Esophagus squamous epithelium (tissue), 5 donors: ENCODE measurements at regions of chr4 and their contacts with region 1.

Region 1: DNA sequence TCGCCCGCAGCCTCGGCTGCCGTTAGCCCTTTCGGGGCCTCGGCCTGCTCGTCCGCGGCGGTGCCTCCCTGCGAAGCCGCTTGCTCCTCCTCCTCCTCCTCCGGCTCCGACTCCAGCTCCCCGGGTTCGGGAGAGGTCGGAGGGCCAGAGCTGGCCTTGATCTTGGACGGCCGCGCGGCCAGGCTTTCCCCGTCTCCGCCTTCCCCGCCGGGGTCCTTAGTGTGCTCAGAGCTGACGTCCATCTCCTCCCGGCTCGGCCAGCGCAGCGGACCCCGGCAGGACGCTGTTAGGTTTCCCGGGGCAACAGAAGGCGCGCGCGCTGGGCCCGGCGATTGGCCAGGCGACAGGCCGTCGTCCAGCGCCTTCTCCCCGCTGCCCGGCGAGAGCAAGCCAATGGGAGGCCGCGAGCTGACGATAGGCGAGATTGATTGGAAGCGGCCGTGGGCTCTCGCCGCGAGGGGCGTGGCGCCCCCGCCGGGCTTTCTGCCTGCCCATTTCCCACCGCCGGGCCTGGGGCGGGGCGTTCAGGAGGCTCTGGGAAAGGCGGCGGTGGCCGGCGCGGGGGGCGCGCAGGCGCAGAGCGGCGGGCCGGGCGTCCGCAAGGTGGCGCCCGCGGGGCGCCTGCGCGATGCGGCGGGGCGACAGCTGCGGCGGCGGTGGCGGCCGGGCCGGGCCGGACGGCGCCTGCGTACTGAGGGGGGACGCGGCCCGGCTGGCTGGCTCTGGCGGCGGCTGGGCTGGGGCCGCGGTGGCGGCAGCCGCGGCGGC is at the start of gene TADA2B:
- DNase-seq: peak; percentile 71
- H3K4me3 ChIP-seq: peak within 1 kb of the TSS; percentile 74 to 100 (median 96)
- H3K27ac ChIP-seq: peak within 1 kb of the TSS; percentile 90 to 96 (median 94)
- H3K4me1 ChIP-seq: peaks cover 35 to 57% (median 38%) of the 10 kb centered on the region in 3 donors
- H3K27me3 ChIP-seq: no peaks in the 10 kb centered on the region
- CTCF ChIP-seq: peak in 4 of 6 experiments; percentile 68 to 84 (median 73)
- POLR2A ChIP-seq: no peak
- total RNA-seq, gene TADA2B: 10.1 to 16.5 (median 13.0) TPM

Region 2: GRCh38 chr4:6909073-6909965 is 133.6 kb before region 1 on chr4 and contains the start of gene TBC1D14:
- intact Hi-C with region 1: loop called (anchors 10 kb)
- DNase-seq: peak; percentile 39
- H3K4me3 ChIP-seq: peak within 1 kb of the TSS; percentile 74 to 93 (median 86)
- H3K27ac ChIP-seq: peak within 1 kb of the TSS; percentile 97 to 99 (median 98)
- H3K4me1 ChIP-seq: peaks cover 16 to 59% (median 19%) of the 10 kb centered on the region in 3 donors
- H3K27me3 ChIP-seq: peaks cover 0 to 10% (median 0%) of the 10 kb centered on the region in 4 donors
- CTCF ChIP-seq: peak in 4 of 6 experiments; percentile 18 to 53 (median 37)
- POLR2A ChIP-seq: peak in 2 of 4 donors; percentile 28 to 61
- total RNA-seq, gene TBC1D14: 28.2 to 50.4 (median 42.1) TPM

Region 3: GRCh38 chr4:7335344-7336069 is 292.6 kb after region 1 on chr4:
- intact Hi-C with region 1: no loop called
- DNase-seq: no peak
- H3K4me3 ChIP-seq: no peak overlapping the region
- H3K27ac ChIP-seq: peak overlapping the region in 3 of 4 donors; percentile 12 to 52 (median 14)
- H3K4me1 ChIP-seq: peaks cover 8 to 26% (median 13%) of the 10 kb centered on the region in 3 donors
- H3K27me3 ChIP-seq: peaks cover 0 to 12% (median 0%) of the 10 kb centered on the region in 4 donors
- CTCF ChIP-seq: peak; percentile 27 to 74 (median 56)
- POLR2A ChIP-seq: no peak